CD14-positive monocyte (primary cell): ENCODE measurements at regions of chr3 and their contacts with region 1.

Region 1: DNA sequence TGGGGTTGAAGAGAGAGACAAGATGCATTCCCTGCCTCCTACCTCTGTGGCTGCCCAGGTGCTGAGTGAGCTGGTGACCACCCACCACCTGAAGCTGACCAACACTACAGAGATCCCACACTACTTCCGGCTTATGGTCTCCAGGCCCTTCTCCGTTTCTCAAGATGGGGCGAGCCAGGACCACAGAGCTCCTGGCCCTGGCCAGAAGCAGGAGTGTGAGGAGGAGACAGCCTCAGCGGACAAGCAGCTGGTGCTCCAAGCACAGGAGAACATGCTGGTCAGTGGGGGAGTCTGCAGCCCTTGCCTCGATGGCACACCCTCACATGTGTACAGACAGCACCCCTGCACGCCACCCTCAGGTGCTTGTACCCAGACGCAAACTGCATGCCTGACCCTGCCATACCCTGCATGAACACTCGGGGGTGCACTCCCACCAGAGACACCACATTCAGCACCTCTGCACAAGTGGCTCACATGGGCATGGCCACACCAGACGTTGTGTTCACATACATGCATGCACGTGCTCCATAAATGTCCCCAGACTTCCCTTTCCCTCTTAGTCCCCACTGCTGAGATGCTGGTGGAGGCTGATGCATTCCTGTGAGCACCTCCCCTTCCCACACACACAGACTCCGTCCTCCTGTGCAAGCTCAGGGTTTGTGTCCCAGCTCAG is 19.0 kb downstream of the ACAA1 start:
- DNase-seq: peak; percentile 58 to 76 (median 66)
- H3K4me3 ChIP-seq: no peak overlapping the region
- H3K4me3 Mint-ChIP-seq: no peak overlapping the region
- H3K27ac ChIP-seq: no peak overlapping the region
- H3K27ac Mint-ChIP-seq: peak overlapping the region in 2 of 7 donors; percentile 48 to 68
- H3K4me1 ChIP-seq: peaks cover 0 to 5% of the 10 kb centered on the region in 2 donors
- H3K4me1 Mint-ChIP-seq: peaks cover 14% of the 10 kb centered on the region
- H3K27me3 ChIP-seq: no peaks in the 10 kb centered on the region
- H3K27me3 Mint-ChIP-seq: peaks cover 3 to 10% (median 4%) of the 10 kb centered on the region in 3 donors
- CTCF ChIP-seq: peak; percentile 71

Region 2: DNA sequence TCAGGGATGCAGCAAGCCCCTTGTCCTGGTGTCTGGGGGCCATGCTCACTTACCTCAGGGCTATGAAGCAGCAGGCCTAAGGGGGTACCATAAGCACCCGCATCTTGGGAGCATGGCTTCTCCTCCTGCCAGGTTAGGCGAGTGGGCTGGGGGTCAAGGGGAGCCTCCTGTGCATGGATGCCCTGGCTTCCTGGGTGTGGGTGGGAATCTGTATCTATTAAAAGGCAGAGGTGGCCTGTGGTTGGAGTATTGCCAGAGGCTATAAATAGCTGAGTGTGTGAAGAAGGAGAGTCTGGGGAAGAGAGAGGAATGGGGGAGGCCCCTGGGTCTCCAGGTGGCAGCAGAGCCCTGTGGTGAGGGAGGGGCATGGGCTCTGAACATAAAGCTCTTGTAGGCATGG is 355.3 kb after region 1 on chr3:
- intact Hi-C with region 1: loop called (anchors 5 kb)
- DNase-seq: no peak
- H3K4me3 ChIP-seq: no peak overlapping the region
- H3K4me3 Mint-ChIP-seq: no peak overlapping the region
- H3K27ac ChIP-seq: no peak overlapping the region
- H3K27ac Mint-ChIP-seq: no peak overlapping the region
- H3K4me1 ChIP-seq: no peaks in the 10 kb centered on the region
- H3K4me1 Mint-ChIP-seq: no peaks in the 10 kb centered on the region
- H3K27me3 ChIP-seq: no peaks in the 10 kb centered on the region
- H3K27me3 Mint-ChIP-seq: peaks cover 0 to 2% (median 0%) of the 10 kb centered on the region in 3 donors
- CTCF ChIP-seq: no peak